CD4-positive, alpha-beta T cell (primary cell): ENCODE measurements at regions of chr20 and their contacts with region 1.

Region 1: GRCh38 chr20:57391074-57391554 is at the start of gene RBM38:
- DNase-seq: peak; percentile 55 to 89 (median 72)
- ATAC-seq: peak; percentile 51
- H3K4me3 ChIP-seq: peak within 1 kb of the TSS; percentile 72
- H3K4me3 Mint-ChIP-seq: peak within 1 kb of the TSS; percentile 99
- H3K27ac ChIP-seq: peak within 1 kb of the TSS; percentile 83 to 88
- H3K27ac Mint-ChIP-seq: peak within 1 kb of the TSS; percentile 96
- H3K4me1 ChIP-seq: peaks cover 63% of the 10 kb centered on the region
- H3K4me1 Mint-ChIP-seq: peaks cover 53% of the 10 kb centered on the region
- H3K27me3 ChIP-seq: no peaks in the 10 kb centered on the region
- H3K27me3 Mint-ChIP-seq: peaks cover 6% of the 10 kb centered on the region
- CTCF ChIP-seq: no peak
- total RNA-seq, gene RBM38: 604 to 645 TPM

Region 2: GRCh38 chr20:57414867-57415592 is 23.9 kb after region 1 on chr20:
- CTCF ChIA-PET with region 1: no interaction called
- POLR2A ChIA-PET with region 1: interaction called, 46 read pairs
- intact Hi-C with region 1: no loop called
- DNase-seq: no peak
- ATAC-seq: no peak
- H3K4me3 ChIP-seq: no peak overlapping the region
- H3K4me3 Mint-ChIP-seq: no peak overlapping the region
- H3K27ac ChIP-seq: no peak overlapping the region
- H3K27ac Mint-ChIP-seq: no peak overlapping the region
- H3K4me1 ChIP-seq: peaks cover 13% of the 10 kb centered on the region
- H3K4me1 Mint-ChIP-seq: peaks cover 19% of the 10 kb centered on the region
- H3K27me3 ChIP-seq: no peaks in the 10 kb centered on the region
- H3K27me3 Mint-ChIP-seq: no peaks in the 10 kb centered on the region
- CTCF ChIP-seq: no peak

Region 3: DNA sequence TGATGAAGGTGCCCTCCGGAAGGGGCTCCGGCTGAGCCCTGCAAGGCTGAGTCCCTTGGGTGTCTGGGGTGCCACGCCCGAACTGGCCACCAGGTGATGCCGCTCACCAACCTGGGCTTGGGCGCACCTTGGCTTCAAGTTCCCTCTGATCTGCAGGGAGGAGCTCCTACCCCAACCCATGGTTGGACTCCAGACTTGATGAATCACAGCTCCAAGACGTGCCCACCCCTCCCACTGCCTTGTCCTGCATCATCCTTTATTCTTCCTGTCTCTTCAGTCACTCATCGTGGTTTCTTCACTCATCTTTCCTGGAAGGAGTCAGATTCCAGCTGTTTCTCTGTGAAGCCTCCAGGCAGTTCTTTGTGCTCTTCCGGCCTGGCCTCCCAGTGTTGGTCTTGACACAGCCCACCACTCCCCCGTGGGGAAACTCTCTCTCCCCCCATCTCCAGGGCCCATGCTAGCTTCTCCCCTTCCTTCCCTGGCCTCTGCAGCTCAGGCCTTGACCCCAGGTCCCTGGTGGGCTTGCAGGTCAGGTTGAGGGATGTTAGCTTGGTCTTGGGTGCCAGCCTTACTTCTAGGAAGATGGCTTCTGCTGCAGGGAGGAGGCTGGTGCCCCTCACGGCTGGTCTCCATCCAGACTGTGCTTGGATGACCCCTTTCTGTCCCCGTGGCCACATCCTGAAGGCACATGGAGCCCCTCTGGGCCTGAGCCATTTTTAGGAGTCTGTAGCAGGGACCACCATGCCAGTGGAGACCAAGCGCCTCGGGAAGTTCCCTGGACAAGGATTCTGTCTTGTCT is 231.7 kb after region 1 on chr20:
- CTCF ChIA-PET with region 1: no interaction called
- POLR2A ChIA-PET with region 1: interaction called, 32 read pairs
- intact Hi-C with region 1: no loop called
- DNase-seq: peak; percentile 65 to 85 (median 74)
- ATAC-seq: peak; percentile 53
- H3K4me3 ChIP-seq: no peak overlapping the region
- H3K4me3 Mint-ChIP-seq: peak overlapping the region; percentile 87
- H3K27ac ChIP-seq: no peak overlapping the region
- H3K27ac Mint-ChIP-seq: peak overlapping the region; percentile 84
- H3K4me1 ChIP-seq: peaks cover 71% of the 10 kb centered on the region
- H3K4me1 Mint-ChIP-seq: peaks cover 88% of the 10 kb centered on the region
- H3K27me3 ChIP-seq: no peaks in the 10 kb centered on the region
- H3K27me3 Mint-ChIP-seq: no peaks in the 10 kb centered on the region
- CTCF ChIP-seq: peak; percentile 73

Region 4: DNA sequence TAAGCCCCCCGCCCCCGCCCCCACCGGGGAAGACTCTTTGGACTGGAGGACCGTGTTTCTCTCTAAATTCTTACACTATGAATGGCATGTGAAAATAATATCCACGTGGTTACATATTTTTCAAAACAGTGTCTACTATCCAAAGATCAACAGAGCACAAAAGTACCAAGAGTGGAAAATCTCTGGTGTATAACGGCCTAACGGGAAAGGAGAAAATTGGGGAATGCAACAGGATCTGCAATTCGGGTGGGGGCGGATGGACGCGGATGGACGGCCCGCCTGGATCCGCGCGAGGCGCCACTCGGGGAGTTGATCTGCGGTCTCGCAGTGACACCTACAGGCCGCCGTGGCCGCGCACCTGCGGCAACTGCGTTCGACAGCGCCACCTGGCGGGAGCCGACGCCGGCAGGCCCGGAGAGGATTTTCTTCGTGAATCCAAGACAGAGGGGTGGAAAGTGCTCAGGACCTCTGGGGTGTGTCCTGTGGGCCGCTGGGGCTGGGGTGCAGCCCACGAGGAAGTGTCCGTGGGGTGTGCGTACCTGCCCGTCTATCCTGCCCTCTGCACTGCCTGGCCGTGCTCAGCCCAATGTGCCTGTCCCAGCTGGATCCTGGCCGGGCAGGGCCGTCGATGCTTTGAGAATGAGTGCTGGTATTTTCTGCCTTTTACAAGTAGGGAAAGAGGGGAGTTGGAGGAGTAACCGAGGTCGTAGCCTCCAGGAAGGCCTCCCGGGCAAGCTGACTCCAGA is 818.7 kb after region 1 on chr20:
- CTCF ChIA-PET with region 1: no interaction called
- POLR2A ChIA-PET with region 1: no interaction called
- intact Hi-C with region 1: loop called in 1 of 2 experiments (anchors 10 kb)
- DNase-seq: peak; percentile 72 to 93 (median 86)
- ATAC-seq: peak; percentile 80
- H3K4me3 ChIP-seq: no peak overlapping the region
- H3K4me3 Mint-ChIP-seq: no peak overlapping the region
- H3K27ac ChIP-seq: no peak overlapping the region
- H3K27ac Mint-ChIP-seq: peak overlapping the region; percentile 51
- H3K4me1 ChIP-seq: peaks cover 9% of the 10 kb centered on the region
- H3K4me1 Mint-ChIP-seq: no peaks in the 10 kb centered on the region
- H3K27me3 ChIP-seq: peaks cover 0 to 9% of the 10 kb centered on the region in 2 experiments
- H3K27me3 Mint-ChIP-seq: peaks cover 4% of the 10 kb centered on the region
- CTCF ChIP-seq: peak; percentile 100